Posterior cingulate gyrus (tissue), 11 donors: ENCODE measurements at regions of chr7 and their contacts with region 1.

Region 1: DNA sequence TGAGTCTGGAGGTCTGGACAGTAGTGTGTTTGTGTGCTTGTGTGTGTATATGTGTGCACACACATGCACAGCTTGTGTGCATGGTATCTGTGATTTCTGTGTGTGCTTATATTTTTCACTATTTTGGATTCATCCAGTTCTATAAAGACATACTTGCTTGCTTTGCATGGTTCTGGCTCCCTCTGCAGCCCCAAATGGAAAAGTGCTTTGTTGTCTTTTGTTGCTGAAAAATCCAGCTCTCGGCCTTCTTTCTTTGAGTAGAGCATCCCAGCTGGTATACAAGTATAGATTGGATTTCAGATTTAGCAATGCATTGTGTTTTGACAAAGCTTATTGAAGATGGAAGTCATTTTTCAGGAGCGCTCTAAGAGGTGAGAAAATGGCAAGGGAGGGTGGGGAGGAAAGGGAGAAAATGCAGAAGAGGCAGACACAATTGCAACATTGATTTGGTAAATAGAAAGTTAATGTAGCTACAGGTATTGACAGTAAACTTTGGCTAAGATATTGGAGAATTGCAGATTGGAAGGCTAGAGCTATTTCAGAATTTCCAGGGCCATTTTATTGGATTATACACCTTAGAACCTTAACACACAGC is 333.9 kb downstream of the AUTS2 start:
- DNase-seq: peak in 7 of 10 donors; percentile 44 to 88 (median 56)

Region 2: DNA sequence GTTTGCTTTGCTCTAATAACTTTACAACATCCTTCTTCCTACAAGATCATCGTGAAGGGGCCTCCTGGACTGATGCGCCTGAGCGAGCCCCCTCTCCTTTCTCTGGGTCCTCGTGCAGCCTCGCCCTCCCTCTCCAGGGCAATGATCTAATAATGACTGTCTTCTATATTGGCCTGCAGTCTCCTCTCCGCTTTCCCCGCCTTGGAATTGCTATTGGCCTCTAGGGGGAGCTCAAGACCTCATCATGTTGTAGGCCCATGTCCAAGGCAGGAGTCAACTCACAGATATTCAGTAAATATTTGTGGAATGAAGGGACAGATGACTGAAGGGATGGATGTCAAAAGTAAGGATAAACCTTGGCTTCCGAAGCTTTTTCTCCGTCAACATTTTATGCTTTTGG is 1755.2 kb before region 1 on chr7:
- intact Hi-C with region 1: loop called (anchors 5 kb)
- DNase-seq: peak in 6 of 10 donors; percentile 12 to 77 (median 50)

Region 3: DNA sequence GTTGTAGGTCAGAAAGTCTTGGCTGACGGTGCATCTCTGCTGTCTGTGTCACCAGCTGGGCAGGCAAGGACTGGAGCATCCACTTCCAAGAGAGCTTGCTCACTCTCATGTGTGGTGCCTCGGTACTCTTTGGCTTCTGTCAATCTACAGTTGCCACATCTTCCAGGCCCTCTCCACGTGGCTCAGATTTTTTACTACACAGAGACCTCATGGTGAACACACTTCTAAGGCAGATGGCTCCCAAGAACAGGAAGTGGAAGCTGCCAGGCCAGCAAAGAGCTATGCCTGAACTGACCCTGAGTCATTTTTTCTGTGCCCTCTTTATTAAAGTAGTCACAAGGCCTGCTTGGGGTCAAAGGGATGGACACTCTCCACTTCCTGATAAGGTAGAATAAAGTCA is 685.4 kb before region 1 on chr7:
- intact Hi-C with region 1: no loop called
- DNase-seq: peak in 5 of 10 donors; percentile 6 to 23 (median 13)

Region 4: GRCh38 chr7:69598081-69598486 is 334.0 kb before region 1 on chr7 and contains the start of gene AUTS2:
- intact Hi-C with region 1: loop called (anchors 10 kb)
- DNase-seq: peak; percentile 82 to 98 (median 86)

Region 5: DNA sequence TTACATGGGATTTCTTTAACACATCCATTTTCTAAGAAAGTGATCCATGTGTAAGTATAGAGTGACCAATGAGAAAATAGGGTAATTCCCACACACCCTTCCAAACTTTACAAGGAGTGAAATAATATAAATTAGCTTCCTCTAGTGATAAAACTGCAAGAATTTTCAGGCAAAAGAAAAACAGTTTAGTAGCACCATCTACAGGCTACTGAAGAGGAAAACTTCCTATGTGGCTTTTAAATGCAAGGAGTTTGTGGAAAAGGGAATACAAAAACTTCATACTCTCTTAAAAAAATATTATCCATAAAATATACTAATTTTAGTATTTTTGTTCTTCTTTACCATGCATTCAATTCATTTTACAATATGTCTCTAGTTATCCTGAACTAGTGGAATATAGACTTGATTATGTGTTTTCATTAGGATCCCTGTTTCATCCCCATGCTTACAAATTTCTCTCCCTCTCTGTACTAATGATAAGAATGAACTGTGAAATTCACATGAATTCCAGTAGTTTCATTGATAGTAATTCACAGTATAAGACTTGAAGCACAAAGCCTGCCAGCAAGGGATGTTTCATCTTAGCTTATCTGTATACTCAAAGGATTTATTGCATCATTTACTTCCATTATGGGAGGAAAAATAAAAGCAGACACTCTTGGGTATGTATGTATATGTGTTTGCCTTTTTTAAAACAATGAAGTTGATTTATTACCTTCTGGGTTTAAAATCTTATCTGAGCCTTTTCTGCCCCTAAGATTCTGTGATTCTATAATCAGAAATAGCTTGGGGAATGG is 109.0 kb after region 1 on chr7:
- intact Hi-C with region 1: loop called (anchors 5 kb)
- DNase-seq: no peak

Region 6: DNA sequence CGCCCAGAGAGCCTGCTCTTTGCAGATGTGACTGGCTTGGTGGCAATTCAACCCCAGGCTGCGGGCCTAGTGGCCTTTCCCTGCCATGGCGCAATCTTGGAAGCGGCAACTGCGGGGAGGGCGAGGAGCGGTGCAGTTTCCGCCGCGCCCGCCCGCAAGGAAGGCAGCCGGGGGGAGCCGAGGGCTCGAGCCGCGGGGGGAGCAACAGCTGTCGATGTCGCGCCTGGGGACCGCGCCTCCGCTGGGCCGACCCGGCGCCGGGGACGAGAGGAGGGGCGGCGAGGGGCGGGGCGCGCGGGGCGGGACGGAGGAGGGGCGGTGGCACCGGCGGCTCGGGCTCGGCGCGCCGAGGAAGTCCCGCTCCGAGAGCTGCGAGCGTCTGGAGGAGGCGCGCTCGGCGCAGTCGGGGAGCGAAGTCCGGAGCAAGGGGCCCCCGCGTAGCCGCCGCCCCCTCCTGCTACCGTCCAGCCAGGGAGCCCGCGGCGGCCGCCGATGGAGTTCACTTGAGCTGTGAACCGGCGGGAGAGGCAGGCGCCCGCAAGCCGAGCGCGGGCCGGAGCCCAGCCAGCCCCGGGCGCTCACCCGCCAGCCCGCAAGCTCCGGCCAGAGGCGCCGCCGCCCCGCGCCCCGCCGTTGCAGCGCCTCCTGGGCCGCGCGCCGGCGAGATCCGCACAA is 761.7 kb after region 1 on chr7:
- intact Hi-C with region 1: loop called (anchors 2 kb)
- DNase-seq: peak; percentile 40 to 93 (median 59)